ENCODE measurements at regions of chr4 and their contacts with region 1.

Region 1: GRCh38 chr4:58871509-58871908 is 1761.3 kb upstream of the IGFBP7 start:
- DNase-seq: no peak
- ATAC-seq: no peak
- H3K4me3 ChIP-seq: no peak overlapping the region
- H3K27ac ChIP-seq: no peak overlapping the region
- H3K4me1 ChIP-seq: no peaks in the 10 kb centered on the region
- H3K27me3 ChIP-seq: no peaks in the 10 kb centered on the region
- CTCF ChIP-seq: no peak
- EP300 ChIP-seq: no peak
- POLR2A ChIP-seq: no peak
- RAD21 ChIP-seq: no peak

Region 2: DNA sequence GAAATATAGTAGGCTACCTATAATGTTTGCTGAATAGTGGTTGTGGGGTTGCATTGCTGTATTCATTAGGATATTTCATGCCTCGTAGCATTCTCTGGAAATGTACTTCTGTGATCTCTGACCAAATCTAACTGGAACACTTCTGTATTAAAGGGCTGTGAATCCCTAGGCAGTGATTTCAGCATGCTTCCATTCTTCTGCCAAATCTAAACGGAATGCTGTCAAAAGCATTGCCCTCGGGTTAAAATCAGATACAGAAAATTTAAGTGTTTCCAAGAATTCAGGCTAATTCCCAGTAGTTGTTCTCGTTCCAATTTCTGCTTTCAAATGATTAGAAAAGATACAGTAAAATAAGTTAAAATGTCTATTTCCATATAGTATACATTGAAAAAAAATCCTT is 86.2 kb after region 1 on chr4:
- CTCF ChIA-PET with region 1: no interaction called
- POLR2A ChIA-PET with region 1: no interaction called
- RAD21 ChIA-PET with region 1: no interaction called
- SMC1A ChIA-PET with region 1: no interaction called
- in situ Hi-C with region 1: loop called (anchors 25 kb)
- intact Hi-C with region 1: no loop called
- DNase-seq: no peak
- ATAC-seq: no peak
- H3K4me3 ChIP-seq: no peak overlapping the region
- H3K27ac ChIP-seq: no peak overlapping the region
- H3K4me1 ChIP-seq: no peaks in the 10 kb centered on the region
- H3K27me3 ChIP-seq: no peaks in the 10 kb centered on the region
- CTCF ChIP-seq: no peak
- EP300 ChIP-seq: no peak
- POLR2A ChIP-seq: no peak
- RAD21 ChIP-seq: no peak

Measured in GM12878 (cell line).